Uterus (tissue), 4 donors: ENCODE measurements at regions of chr20 and their contacts with region 1.

Region 1: GRCh38 chr20:31661625-31662371 is 24.1 kb downstream of the COX4I2 start:
- DNase-seq: peak; percentile 79 to 82
- H3K4me3 ChIP-seq: peak overlapping the region; percentile 20 to 30
- H3K27ac ChIP-seq: peak overlapping the region; percentile 64 to 79
- H3K4me1 ChIP-seq: peaks cover 0 to 2% of the 10 kb centered on the region in 2 donors
- H3K27me3 ChIP-seq: no peaks in the 10 kb centered on the region
- CTCF ChIP-seq: peak; percentile 65 to 97 (median 82)
- POLR2A ChIP-seq: peak; percentile 45 to 54

Region 2: DNA sequence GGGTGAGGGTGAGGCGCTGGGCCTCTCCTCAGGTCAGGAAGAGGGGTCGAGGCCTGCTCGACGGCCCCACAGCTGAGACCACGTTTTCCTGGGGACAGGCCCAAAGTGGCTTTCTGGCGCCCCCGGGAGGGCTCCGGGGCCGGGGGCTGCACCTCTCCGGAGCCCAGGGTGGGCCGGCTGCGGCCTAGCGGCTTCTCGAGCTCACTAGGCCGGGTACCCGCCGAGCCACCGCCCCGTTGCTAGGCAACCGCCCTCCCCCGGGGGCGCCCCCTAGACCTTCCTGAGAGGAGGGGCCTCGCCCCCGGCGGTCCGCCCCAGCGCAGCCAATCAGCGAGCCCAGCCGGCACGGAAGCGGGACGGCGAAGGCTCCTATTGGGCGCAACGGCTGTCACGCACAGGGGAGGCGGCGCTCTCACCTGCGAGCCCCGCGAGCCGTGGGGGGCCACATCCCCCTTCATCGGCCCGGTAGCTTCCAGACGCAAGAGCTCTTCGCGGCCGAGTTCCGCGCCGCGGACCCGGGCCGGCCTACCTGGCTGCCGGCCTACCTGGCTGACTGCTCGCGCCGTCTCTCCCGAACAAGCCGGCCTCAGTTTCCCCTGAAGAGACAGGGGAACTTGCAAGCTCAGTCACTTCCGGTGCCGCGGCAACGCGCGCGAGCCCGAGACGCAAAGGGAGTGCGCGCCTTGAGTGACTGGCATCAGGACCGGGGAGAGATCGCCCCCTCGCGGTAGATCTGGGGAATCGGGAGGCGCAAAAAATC is 61.7 kb after region 1 on chr20:
- intact Hi-C with region 1: loop called (anchors 2 kb)
- DNase-seq: peak; percentile 97 to 98
- H3K4me3 ChIP-seq: peak overlapping the region; percentile 75 to 90
- H3K27ac ChIP-seq: peak overlapping the region; percentile 98 to 99
- H3K4me1 ChIP-seq: no peaks in the 10 kb centered on the region
- H3K27me3 ChIP-seq: no peaks in the 10 kb centered on the region
- CTCF ChIP-seq: peak; percentile 91 to 97 (median 96)
- POLR2A ChIP-seq: peak; percentile 50 to 77

Region 3: GRCh38 chr20:31869942-31870725 is 208.3 kb after region 1 on chr20 and contains the starts of genes DUSP15 and TTLL9:
- intact Hi-C with region 1: no loop called
- DNase-seq: no peak
- H3K4me3 ChIP-seq: peak within 1 kb of the TSS; percentile 23 to 80
- H3K27ac ChIP-seq: peak within 1 kb of the TSS; percentile 42 to 69
- H3K4me1 ChIP-seq: peaks cover 0 to 7% of the 10 kb centered on the region in 2 donors
- H3K27me3 ChIP-seq: no peaks in the 10 kb centered on the region
- CTCF ChIP-seq: no peak
- POLR2A ChIP-seq: peak in 1 of 2 donors; percentile 44
- total RNA-seq, gene DUSP15: 1.6 to 45.6 (median 8.8) TPM in 3 of 4 donors, not detected in the other
- total RNA-seq, gene TTLL9: under 0.01 to 2.9 (median 0.91) TPM in 3 of 4 donors, not detected in the other